Kidney (tissue), 22 donors: ENCODE measurements at regions of chr5 and their contacts with region 1.

Region 1: GRCh38 chr5:67165526-67166459 is 30.8 kb downstream of the CD180 start:
- DNase-seq: peak; percentile 88 to 96 (median 94)
- H3K4me3 ChIP-seq: peak overlapping the region in 1 of 3 donors; percentile 8
- H3K27ac ChIP-seq: peak overlapping the region in 1 of 2 donors; percentile 6
- H3K4me1 ChIP-seq: no peaks in the 10 kb centered on the region
- H3K27me3 ChIP-seq: no peaks in the 10 kb centered on the region
- CTCF ChIP-seq: peak; percentile 62

Region 2: GRCh38 chr5:67215583-67216471 is 50.0 kb after region 1 on chr5:
- intact Hi-C with region 1: loop called (anchors 10 kb)
- DNase-seq: peak in 3 of 5 donors; percentile 45 to 95 (median 75)
- H3K4me3 ChIP-seq: peak overlapping the region in 1 of 3 donors; percentile 44
- H3K27ac ChIP-seq: peak overlapping the region; percentile 60 to 66
- H3K4me1 ChIP-seq: peaks cover 0 to 14% (median 12%) of the 10 kb centered on the region in 3 donors
- H3K27me3 ChIP-seq: no peaks in the 10 kb centered on the region
- CTCF ChIP-seq: no peak